HCT116 (cell line): ENCODE measurements at regions of chr19 and their contacts with region 1.

Region 1: GRCh38 chr19:14006243-14006765 is at the start of gene RFX1:
- DNase-seq: peak; percentile 100
- ATAC-seq: peak; percentile 85
- H3K4me3 ChIP-seq: peak within 1 kb of the TSS; percentile 70 to 76
- H3K27ac ChIP-seq: peak within 1 kb of the TSS; percentile 79
- H3K4me1 ChIP-seq: peaks cover 5 to 26% of the 10 kb centered on the region in 2 experiments; a peak in 3 of 4 replicates
- H3K27me3 ChIP-seq: no peaks in the 10 kb centered on the region
- CTCF ChIP-seq: no peak
- POLR2A ChIP-seq: no peak
- RAD21 ChIP-seq: no peak
- total RNA-seq, gene RFX1: 16.3 TPM

Region 2: GRCh38 chr19:13952154-13953035 is 53.9 kb before region 1 on chr19 and contains the start of gene DCAF15:
- CTCF ChIA-PET with region 1: no interaction called
- POLR2A ChIA-PET with region 1: no interaction called
- RAD21 ChIA-PET with region 1: no interaction called
- intact Hi-C with region 1: loop called (anchors 2 kb)
- DNase-seq: peak; percentile 99
- ATAC-seq: peak; percentile 98
- H3K4me3 ChIP-seq: peak within 1 kb of the TSS; percentile 91 to 92
- H3K27ac ChIP-seq: peak within 1 kb of the TSS; percentile 67
- H3K4me1 ChIP-seq: peaks cover 7 to 18% of the 10 kb centered on the region in 2 experiments
- H3K27me3 ChIP-seq: no peaks in the 10 kb centered on the region
- CTCF ChIP-seq: no peak
- POLR2A ChIP-seq: peak; percentile 24
- RAD21 ChIP-seq: no peak
- total RNA-seq, gene DCAF15: 46.2 TPM

Region 3: GRCh38 chr19:13995878-13996765 is 10.2 kb before region 1 on chr19:
- CTCF ChIA-PET with region 1: no interaction called
- POLR2A ChIA-PET with region 1: no interaction called
- RAD21 ChIA-PET with region 1: no interaction called
- intact Hi-C with region 1: no loop called
- DNase-seq: no peak
- ATAC-seq: no peak
- H3K4me3 ChIP-seq: no peak overlapping the region
- H3K27ac ChIP-seq: no peak overlapping the region
- H3K4me1 ChIP-seq: no peaks in the 10 kb centered on the region
- H3K27me3 ChIP-seq: no peaks in the 10 kb centered on the region
- CTCF ChIP-seq: no peak
- POLR2A ChIP-seq: no peak
- RAD21 ChIP-seq: no peak